Adrenal gland (tissue), 19 donors: ENCODE measurements at regions of chr12 and their contacts with region 1.

Region 1: DNA sequence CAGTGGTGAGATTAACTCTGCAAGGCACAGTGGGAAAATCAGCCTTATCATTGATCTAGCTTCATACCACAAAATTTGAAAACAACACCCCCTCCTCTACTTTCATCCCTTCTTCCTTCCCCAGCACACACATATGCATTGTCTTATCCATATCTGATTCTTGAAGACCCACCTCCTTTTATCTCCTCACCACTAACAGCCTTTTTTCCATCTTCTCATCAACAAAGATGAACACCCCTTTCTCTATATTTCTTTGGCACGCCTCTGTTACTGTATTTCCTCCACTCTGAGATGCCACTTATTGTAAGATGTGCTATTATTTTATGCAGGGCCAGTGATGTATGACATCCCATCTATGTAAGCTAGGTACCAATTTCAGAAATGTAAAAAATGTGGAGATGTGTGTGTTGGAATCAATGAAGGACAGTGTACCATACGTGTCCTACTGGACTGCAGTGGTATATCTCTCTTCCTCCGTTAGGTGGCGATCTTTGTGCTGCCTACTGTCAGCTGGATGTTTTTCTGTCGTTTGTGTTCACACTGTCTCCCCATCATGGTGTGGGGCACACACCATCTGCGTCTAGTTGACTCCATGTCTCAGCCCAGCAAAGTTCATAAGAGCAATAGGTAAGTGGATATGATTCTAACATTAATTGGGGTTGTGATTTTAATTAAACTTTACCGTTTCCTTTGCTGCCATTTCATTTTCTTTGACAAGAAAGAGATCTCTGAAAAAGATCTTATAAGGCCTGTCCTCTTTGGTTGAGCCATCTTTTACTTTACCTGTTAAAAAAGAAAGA is 24.0 kb downstream of the CCDC38 start:
- DNase-seq: peak; percentile 43 to 78 (median 51)
- H3K4me3 ChIP-seq: no peak overlapping the region
- H3K27ac ChIP-seq: no peak overlapping the region
- H3K4me1 ChIP-seq: no peaks in the 10 kb centered on the region
- H3K27me3 ChIP-seq: no peaks in the 10 kb centered on the region
- CTCF ChIP-seq: peak; percentile 70 to 92 (median 87)
- POLR2A ChIP-seq: no peak

Region 2: DNA sequence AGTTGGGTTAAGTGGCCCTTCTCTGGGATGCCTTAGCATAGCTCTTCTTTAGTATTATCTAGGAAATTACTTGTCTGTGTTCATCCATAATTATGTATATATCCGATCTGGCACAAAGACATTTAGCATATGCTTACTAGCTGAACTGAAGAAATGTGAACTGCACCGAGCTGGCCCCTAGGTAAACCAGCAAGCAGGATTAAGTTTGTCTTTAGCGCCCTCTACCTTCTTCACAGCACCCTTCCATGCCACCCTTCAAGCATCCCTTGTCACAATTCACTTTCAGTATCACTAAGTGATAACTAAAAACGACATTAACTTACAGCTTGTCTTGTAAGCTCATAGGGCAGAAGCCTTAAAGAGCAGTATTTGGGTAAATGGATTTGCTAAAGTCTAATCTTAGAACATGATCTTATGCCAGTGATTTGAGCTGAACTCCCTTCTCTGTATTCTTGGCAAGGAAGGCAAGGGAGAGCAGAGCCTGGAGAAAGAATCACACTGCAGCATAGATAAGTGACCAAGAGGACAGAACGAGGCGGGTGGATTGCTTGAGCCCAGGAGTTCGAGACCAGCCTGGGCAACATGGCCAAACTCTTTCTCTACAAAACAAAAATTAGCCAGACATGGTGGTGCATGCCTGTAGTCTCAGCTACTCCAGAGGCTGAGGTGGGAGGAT is 80.4 kb after region 1 on chr12:
- intact Hi-C with region 1: loop called (anchors 2 to 5 kb)
- DNase-seq: peak; percentile 26 to 73 (median 53)
- H3K4me3 ChIP-seq: no peak overlapping the region
- H3K27ac ChIP-seq: no peak overlapping the region
- H3K4me1 ChIP-seq: no peaks in the 10 kb centered on the region
- H3K27me3 ChIP-seq: no peaks in the 10 kb centered on the region
- CTCF ChIP-seq: peak; percentile 44 to 83 (median 75)
- POLR2A ChIP-seq: no peak

Region 3: DNA sequence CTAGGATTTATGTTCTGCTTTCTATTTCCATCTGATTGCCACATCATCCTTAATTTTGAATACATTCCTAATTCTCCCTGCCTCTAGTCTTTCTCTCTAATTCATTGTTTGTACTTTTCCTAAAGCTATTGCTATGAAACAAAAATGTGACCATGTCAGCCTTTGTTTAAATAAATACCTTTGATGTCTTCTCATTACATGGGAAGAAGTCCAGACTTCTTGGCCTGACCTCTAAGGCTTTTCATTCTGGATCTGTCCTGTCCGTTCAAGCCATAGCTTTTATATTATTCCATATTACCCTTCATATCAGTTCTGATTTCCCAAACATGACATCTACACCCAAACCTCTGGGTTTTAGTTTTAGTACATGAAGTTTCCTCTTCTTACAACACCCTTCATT is 390.5 kb after region 1 on chr12:
- intact Hi-C with region 1: no loop called
- DNase-seq: no peak
- H3K4me3 ChIP-seq: no peak overlapping the region
- H3K27ac ChIP-seq: no peak overlapping the region
- H3K4me1 ChIP-seq: peaks cover 0 to 5% of the 10 kb centered on the region in 2 donors
- H3K27me3 ChIP-seq: no peaks in the 10 kb centered on the region
- CTCF ChIP-seq: no peak
- POLR2A ChIP-seq: no peak

Region 4: GRCh38 chr12:96516472-96517430 is 598.4 kb after region 1 on chr12:
- intact Hi-C with region 1: loop called in 1 of 2 experiments (anchors 10 kb)
- DNase-seq: peak; percentile 55 to 91 (median 77)
- H3K4me3 ChIP-seq: no peak overlapping the region
- H3K27ac ChIP-seq: no peak overlapping the region
- H3K4me1 ChIP-seq: no peaks in the 10 kb centered on the region
- H3K27me3 ChIP-seq: no peaks in the 10 kb centered on the region
- CTCF ChIP-seq: peak; percentile 52 to 84 (median 76)
- POLR2A ChIP-seq: no peak